Right cardiac atrium (tissue), 5 donors: ENCODE measurements at regions of chr20 and their contacts with region 1.

Region 1: GRCh38 chr20:53915446-53916172 is 154.8 kb downstream of the BCAS1 start:
- DNase-seq: peak; percentile 93 to 99 (median 97)
- ATAC-seq: peak; percentile 92 to 93
- H3K4me3 ChIP-seq: peak overlapping the region; percentile 60
- H3K27ac ChIP-seq: peak overlapping the region; percentile 96
- H3K4me1 ChIP-seq: peaks cover 9% of the 10 kb centered on the region
- H3K27me3 ChIP-seq: no peaks in the 10 kb centered on the region

Region 2: DNA sequence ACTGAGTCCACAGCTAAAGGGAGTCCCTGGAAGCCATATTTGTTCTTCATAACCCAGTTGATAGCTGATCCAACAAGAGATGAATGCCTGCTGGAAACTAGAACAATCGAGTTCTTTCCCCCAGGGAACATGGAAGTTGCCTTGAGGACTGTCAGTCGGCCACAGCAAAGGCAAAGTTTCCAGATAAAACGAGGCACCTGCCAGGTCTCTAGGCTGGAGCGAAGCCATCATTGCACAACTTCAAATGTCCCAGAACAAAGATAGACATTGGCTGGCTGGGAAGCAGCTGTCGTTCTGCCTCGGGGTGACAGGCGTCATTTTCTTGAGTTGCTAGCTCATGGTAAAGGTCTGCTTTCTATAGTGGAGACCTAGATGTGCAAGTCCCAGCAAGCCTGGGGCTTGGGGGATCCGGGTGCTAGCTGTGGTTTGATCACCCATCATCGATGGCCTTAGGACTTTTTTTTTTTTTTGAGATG is 137.5 kb before region 1 on chr20:
- intact Hi-C with region 1: no loop called
- DNase-seq: no peak
- ATAC-seq: no peak
- H3K4me3 ChIP-seq: no peak overlapping the region
- H3K27ac ChIP-seq: no peak overlapping the region
- H3K4me1 ChIP-seq: peaks cover 2% of the 10 kb centered on the region
- H3K27me3 ChIP-seq: no peaks in the 10 kb centered on the region

Region 3: GRCh38 chr20:53869466-53870258 is 45.9 kb before region 1 on chr20:
- intact Hi-C with region 1: loop called in 1 of 4 experiments (anchors 10 kb)
- DNase-seq: peak in 2 of 3 donors; percentile 30 to 56
- ATAC-seq: peak; percentile 83 to 89
- H3K4me3 ChIP-seq: no peak overlapping the region
- H3K27ac ChIP-seq: no peak overlapping the region
- H3K4me1 ChIP-seq: peaks cover 2% of the 10 kb centered on the region
- H3K27me3 ChIP-seq: no peaks in the 10 kb centered on the region